WTC11 (cell line): ENCODE measurements at regions of chr13 and their contacts with region 1.

Region 1: GRCh38 chr13:27339299-27339698 is 68.7 kb downstream of the RASL11A start:
- DNase-seq: peak; percentile 75
- ATAC-seq: peak; percentile 85
- H3K4me3 Mint-ChIP-seq: no peak overlapping the region
- H3K27ac Mint-ChIP-seq: no peak overlapping the region
- H3K4me1 Mint-ChIP-seq: peaks cover 50% of the 10 kb centered on the region
- H3K27me3 Mint-ChIP-seq: no peaks in the 10 kb centered on the region; the same call in 1 of the 2 replicates
- CTCF ChIP-seq: peak; percentile 43

Region 2: DNA sequence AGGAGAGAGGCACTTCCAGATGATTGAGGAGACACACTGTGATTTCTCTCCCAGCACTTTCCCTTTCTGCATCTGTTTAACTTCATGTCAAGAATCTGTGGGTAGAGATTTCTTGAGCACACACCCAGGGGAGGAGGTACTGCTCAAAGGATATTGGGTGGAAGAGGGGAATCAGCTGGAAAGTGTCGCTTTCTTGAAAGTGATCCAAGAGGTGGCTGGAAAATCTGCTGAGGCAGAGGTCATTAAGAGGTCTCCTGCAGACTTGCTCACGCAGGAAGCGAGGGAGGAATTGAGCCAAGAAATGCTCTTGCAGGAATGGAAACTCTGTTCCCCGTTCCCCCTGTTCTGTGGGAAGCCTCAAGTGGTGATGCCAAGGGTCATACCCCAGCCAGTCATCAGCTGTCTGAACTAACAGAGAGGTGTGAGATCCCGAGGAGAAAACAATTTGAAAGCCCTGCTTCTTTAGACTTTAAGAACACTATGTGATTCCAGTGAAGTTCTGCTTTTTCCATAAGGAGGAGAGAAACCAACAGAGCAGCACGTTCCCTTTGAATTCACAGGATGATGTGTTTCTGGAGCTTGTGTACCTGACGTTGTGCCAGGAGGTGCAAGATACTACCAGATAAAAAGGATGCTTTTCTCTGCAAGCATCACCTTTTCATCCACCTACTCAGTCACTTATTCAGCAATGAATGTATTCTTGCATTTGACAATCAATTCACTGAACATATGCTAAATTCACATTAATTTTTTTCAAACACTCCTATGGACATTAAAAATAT is 415.3 kb before region 1 on chr13:
- CTCF ChIA-PET with region 1: no interaction called
- POLR2A ChIA-PET with region 1: no interaction called
- DNase-seq: no peak
- ATAC-seq: no peak
- H3K4me3 Mint-ChIP-seq: no peak overlapping the region
- H3K27ac Mint-ChIP-seq: no peak overlapping the region
- H3K4me1 Mint-ChIP-seq: no peaks in the 10 kb centered on the region
- H3K27me3 Mint-ChIP-seq: no peaks in the 10 kb centered on the region; the same call in 1 of the 2 replicates
- CTCF ChIP-seq: no peak

Region 3: DNA sequence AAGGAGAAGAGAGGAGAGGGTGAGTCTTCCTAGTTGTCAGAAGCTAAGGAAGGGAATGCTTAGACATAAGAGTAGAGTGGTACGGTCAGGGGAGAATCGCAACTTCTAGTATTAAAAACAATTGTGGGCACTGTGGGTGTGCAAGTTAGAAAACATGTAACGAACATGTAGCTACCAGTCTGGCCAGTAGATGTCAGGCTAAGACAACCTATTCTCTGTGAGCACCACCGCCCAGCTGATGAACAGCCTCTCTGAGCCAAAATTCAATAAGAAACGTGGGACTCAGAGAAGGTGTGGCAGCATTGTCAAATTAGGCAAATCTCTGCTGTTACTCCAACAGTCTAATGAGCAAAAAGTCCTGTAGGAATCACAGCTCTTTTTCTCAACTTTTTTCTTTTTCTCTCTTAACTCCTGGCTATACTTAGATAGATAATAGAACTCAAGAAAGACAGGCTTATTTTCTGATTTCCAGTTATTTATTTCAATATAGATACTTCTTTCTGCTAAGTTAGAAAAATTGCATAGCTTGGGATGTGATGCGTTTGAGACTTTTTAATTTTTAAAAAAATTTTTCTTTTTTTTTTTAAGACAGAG is 353.9 kb before region 1 on chr13:
- CTCF ChIA-PET with region 1: interaction called, 15 read pairs
- POLR2A ChIA-PET with region 1: no interaction called
- DNase-seq: peak; percentile 64
- ATAC-seq: peak; percentile 80
- H3K4me3 Mint-ChIP-seq: no peak overlapping the region
- H3K27ac Mint-ChIP-seq: no peak overlapping the region
- H3K4me1 Mint-ChIP-seq: peaks cover 12% of the 10 kb centered on the region
- H3K27me3 Mint-ChIP-seq: no peaks in the 10 kb centered on the region; the same call in 1 of the 2 replicates
- CTCF ChIP-seq: peak; percentile 60

Region 4: DNA sequence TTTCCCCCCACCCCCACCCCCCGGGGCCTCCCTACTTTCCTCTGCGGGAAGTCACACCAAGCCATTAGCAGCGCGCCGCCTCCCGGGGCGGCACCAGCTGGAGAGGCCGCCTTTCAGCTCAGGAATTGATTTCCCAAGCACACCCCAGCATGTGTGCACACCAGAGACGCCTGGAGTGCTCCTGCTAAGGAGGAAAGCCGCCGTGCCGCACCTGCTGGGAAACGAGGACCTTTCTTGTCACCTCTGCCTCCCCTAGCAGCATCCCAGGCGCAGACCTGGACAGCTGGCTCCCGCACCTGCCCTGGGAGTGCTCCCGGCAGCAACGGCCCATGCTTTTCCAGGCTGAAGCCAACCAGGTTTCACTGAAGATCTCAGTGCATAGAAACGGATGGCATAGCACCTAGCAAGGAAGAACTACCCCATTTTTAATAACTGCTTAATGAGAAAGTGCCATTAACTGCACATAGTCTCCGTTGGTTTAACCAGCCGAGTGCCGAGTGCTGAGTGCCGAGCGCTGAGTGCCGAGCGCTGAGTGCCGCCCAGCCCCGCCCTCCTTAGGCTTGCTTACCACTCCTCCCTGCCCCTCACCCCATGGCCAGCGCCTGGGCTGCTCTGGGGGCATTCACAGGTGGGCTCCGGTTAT is 332.7 kb before region 1 on chr13:
- CTCF ChIA-PET with region 1: interaction called, 12 read pairs
- POLR2A ChIA-PET with region 1: no interaction called
- DNase-seq: peak; percentile 42
- ATAC-seq: peak; percentile 84
- H3K4me3 Mint-ChIP-seq: peak overlapping the region; percentile 71
- H3K27ac Mint-ChIP-seq: no peak overlapping the region
- H3K4me1 Mint-ChIP-seq: peaks cover 24% of the 10 kb centered on the region
- H3K27me3 Mint-ChIP-seq: peaks cover 24% of the 10 kb centered on the region
- CTCF ChIP-seq: no peak

Region 5: DNA sequence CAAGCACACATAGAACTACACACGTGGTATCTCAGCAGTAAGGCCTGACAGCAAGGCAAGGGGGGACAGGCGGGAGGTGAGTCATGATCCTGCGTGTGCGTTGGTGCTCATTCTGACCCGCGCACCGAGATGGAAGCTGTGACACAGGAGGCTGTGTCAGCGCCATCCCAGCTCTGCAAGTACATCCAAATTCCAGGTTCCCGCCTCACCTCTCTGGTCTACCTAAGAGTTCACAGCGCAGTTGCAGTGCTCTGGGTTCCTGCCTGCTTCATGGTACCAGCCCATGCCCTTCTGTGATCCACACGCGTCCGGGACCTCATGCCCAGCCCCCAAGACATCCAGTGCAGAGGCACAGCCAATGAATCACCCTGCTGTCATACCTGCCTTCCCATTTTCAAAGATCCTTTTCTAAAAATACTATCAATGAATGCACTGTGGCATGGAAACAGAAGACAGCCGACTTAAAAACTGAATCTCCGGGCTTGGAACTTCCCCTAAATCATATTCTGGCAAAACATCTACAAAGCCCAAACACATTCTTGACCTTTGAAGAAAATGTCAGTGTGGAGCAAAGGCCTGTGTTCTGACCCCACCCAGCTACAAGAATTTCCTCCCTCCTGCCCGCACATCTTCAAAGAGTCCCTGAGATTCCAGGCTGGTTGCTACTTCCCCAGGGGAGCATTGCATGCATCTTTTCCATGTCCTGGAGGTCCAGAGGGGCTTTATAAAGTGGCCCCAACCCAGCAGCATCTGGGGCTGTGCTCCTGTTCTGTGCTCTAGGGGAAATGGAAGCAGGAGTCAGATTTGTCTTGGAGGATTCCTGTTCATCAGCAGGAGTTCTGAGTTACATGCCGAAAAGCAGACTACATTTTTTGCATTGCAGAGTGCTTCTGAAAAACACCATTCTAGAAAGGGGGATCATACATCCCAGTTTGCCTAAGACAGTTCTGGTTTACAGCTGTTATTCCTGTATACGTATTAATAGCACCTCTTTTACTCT is 303.0 kb before region 1 on chr13:
- CTCF ChIA-PET with region 1: interaction called, 12 read pairs
- POLR2A ChIA-PET with region 1: no interaction called
- DNase-seq: no peak
- ATAC-seq: no peak
- H3K4me3 Mint-ChIP-seq: no peak overlapping the region
- H3K27ac Mint-ChIP-seq: no peak overlapping the region
- H3K4me1 Mint-ChIP-seq: peaks cover 42% of the 10 kb centered on the region
- H3K27me3 Mint-ChIP-seq: peaks cover 6% of the 10 kb centered on the region
- CTCF ChIP-seq: no peak

Region 6: DNA sequence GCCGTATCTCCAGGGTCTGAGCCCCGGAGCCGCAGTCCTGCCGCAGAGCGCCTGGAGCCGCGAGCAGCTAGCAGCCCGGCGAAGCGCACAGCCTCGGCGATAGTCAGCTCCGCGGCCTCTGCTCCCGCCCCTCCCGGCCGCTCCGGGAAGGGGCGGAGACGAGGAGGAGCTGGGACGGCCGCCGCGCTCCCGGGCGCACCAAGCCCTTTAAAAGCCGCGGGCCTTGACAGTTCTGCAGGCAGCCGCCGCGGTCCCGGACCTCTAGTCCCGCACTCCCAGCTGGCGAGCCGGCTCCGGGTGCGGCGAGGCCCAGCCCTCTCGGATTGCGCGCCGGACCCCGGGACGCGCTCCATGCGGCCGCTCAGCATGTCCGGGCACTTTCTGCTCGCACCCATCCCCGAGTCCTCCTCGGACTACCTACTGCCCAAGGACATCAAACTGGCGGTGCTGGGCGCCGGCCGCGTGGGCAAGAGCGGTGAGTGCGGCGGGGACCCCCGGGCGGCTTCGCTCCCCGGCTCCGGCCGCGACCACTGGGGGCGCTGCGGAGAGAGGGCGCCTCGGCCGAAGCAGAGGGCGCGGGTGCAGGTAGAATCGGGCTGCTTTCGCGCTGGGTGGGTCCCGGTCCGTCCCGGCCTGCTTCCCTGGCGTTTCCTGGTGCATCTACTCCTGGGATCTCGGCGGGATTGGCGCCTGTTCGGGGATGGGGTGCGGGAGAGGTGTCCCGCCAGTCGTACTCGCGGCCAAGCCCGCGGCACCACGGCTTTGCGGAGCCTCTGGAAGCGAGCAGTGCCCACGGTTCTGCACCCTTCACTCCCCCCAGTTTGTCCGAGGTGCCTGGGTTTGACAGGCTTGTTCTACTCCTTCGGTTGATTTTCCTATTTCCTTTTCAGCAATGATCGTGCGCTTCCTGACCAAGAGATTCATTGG is 68.4 kb before region 1 on chr13 and contains the start of gene RASL11A:
- CTCF ChIA-PET with region 1: interaction called, 11 read pairs
- POLR2A ChIA-PET with region 1: interaction called, 3 read pairs
- DNase-seq: peak; percentile 87
- ATAC-seq: peak; percentile 90
- H3K4me3 Mint-ChIP-seq: peak within 1 kb of the TSS; percentile 89
- H3K27ac Mint-ChIP-seq: peak within 1 kb of the TSS; percentile 92; the same call in 1 of the 2 replicates
- H3K4me1 Mint-ChIP-seq: peaks cover 15% of the 10 kb centered on the region
- H3K27me3 Mint-ChIP-seq: peaks cover 45% of the 10 kb centered on the region
- CTCF ChIP-seq: peak; percentile 91
- total RNA-seq, gene RASL11A: 2.5 to 3.8 TPM (median 3.5 TPM) in 3 replicates

Region 7: DNA sequence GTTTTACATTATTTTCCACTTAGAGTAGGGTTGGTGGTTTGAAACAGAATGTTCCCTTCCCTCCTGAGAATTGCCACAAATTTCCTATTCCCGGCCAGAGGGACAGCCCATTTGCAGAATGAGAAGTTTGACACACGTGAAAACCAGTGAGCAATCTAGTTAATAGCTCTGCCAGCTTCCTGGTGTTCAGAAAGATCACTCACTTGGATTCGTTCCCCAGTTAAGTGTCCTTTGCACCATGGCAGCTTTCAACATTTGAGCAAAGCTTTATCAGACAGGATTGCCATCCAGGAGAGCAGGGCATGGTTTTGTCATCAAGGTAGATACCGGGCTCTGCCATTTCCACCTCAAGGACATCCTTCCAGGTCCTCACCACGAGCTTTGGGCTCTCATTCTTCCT is 40.5 kb before region 1 on chr13:
- CTCF ChIA-PET with region 1: interaction called, 6 read pairs
- POLR2A ChIA-PET with region 1: interaction called, 12 read pairs
- DNase-seq: no peak
- ATAC-seq: no peak
- H3K4me3 Mint-ChIP-seq: no peak overlapping the region
- H3K27ac Mint-ChIP-seq: no peak overlapping the region
- H3K4me1 Mint-ChIP-seq: no peaks in the 10 kb centered on the region
- H3K27me3 Mint-ChIP-seq: no peaks in the 10 kb centered on the region
- CTCF ChIP-seq: no peak

Region 8: DNA sequence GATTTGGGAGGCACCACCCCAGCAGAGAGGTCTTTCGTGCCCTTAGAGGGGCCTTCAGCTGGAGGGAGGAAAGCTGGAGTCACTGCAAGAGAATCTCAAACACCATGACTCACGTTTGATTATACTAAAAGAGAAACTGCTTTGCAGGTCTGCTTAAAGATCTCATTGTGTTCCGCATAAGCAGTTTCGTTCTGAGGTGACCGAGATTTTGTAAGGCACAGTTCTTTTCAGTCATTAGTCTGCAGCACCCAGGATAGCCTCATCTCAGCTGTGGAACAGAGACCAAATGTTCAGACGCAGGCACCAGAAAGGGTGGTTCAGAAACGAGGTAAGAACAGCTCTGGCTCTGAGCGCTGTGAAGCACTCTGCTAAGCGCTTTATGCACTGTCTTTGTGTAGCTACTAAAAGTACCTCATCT is 13.9 kb after region 1 on chr13:
- CTCF ChIA-PET with region 1: interaction called, 91 read pairs
- POLR2A ChIA-PET with region 1: no interaction called
- DNase-seq: no peak
- ATAC-seq: no peak
- H3K4me3 Mint-ChIP-seq: no peak overlapping the region
- H3K27ac Mint-ChIP-seq: 0 out of 2 replicates have a peak overlapping the region, but pooled peaks have one; percentile 12
- H3K4me1 Mint-ChIP-seq: peaks cover 25% of the 10 kb centered on the region
- H3K27me3 Mint-ChIP-seq: no peaks in the 10 kb centered on the region; the same call in 1 of the 2 replicates
- CTCF ChIP-seq: no peak